BJ (cell line): ENCODE measurements at regions of chr4 and their contacts with region 1.

Region 1: DNA sequence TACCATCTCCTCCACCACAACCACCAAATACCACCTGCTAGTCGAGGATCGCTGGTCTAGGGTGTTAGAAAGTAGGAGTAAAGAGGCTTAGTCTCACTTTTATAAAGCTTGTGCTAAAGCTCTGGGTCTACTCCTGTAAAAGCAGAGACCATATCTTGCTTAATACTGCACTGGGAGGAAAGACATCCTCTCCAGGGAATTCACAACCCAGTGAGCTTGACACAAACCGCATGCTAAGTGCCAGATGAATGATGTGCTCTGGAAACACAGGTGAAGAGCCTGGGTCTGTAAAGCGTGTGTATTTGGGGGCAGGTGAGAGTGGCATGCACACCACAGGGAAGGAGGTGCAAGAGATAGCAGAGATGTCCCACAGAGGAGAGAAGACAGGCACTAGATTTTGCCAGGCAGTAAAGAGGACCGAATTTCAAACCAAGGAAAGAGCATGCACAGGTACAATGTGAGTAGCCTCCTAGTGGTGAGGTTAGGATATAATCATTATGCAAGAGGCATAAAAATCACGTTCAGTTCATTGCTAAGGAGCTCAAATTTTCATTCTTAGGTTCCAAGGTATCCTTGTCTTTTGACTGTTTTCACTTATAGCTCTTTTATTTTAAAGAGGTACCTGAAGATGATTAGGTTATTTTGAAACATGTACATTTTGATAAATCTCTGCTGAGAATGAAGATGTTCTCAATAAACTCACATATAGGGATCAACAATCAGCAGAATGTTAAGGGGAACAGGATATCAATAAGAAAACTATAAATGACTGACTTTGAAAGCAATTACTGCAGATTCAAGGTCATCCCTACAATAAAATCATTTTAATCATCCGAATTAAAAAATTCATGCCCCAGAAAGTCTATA is 20.7 kb downstream of the TAPT1 start:
- DNase-seq: no peak
- H3K4me3 ChIP-seq: no peak overlapping the region
- H3K27me3 ChIP-seq: no peaks in the 10 kb centered on the region
- CTCF ChIP-seq: peak; percentile 49

Region 2: DNA sequence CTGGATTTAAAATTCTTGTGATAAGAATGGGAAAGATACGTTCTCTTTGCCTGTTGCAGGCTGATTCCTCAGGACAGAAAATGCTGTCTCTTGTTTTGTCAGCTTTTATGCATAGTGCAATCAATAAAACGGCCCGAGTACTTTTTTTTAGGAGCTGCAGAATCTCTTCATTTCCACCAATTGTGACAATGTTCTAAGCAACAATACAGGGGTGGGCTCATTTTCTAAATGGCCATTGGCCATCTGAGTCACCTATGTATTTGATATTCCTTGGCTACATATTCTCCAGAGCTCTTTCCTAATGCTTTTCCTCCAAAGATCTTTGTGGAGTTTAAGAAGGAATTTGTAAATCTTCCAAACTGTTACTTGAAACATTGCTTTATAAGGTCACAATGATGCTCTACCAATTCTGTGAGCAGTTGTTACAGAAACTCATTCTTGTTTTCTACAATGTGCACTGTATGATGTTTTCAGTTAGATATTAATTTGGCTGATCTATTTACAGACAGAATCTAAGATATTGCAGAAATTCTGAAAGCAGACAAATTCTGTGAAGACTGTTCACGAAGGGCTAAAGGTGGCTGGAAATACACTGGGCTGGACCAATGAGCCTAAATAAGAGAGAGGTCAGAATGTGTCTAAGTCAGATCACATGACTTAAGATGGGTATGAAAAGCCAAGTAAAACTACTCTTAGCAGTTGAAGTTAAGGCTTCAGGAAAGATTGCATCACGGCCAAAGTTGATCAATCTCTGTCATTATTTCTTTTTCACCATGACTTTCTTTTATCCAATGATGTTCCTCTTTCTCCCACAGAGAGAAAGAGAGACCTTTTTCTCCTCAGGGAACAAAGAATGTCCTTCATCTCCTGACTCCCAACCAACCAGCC is 12.7 kb before region 1 on chr4:
- CTCF ChIA-PET with region 1: interaction called, 19 read pairs
- POLR2A ChIA-PET with region 1: no interaction called
- DNase-seq: no peak
- H3K4me3 ChIP-seq: no peak overlapping the region
- H3K27me3 ChIP-seq: no peaks in the 10 kb centered on the region
- CTCF ChIP-seq: no peak

Region 3: DNA sequence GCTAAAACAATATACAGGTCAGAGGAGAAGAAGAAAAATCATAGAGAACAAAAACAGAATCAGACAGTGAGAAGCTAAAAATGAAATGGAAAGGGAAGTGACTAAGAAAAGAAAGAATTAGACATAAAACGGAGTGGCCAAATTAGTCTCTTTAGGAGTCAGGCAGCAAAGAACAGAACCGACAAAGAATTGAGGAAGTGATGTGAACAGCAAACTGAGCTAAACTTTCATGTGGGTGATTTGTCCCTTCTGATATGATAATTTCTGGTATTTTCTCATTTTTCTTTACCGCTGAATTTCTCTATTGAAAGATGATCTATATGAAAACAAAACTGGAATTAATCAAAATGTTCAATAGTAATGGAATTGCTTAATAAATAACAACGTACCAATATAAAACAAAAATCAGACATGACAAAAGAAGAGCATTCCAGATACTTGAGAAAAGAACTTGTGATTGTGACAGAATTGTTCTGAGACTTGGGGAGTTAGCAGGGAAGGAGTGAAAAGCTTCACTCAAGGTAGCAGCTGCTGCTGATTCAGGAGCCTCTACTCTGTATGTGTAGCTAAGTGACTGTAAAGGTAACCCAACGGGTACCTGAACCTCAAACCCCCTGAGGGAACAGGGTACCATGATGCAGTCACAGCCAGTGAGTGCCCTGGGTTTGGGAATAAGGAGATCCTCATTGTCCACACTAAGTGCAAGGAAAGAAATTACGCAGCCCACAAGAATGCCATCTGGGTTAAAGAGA is 11.9 kb after region 1 on chr4:
- CTCF ChIA-PET with region 1: interaction called, 12 read pairs
- POLR2A ChIA-PET with region 1: no interaction called
- DNase-seq: no peak
- H3K4me3 ChIP-seq: no peak overlapping the region
- H3K27me3 ChIP-seq: no peaks in the 10 kb centered on the region
- CTCF ChIP-seq: no peak